ENCODE measurements at regions of chr5 and their contacts with region 1.

Region 1: DNA sequence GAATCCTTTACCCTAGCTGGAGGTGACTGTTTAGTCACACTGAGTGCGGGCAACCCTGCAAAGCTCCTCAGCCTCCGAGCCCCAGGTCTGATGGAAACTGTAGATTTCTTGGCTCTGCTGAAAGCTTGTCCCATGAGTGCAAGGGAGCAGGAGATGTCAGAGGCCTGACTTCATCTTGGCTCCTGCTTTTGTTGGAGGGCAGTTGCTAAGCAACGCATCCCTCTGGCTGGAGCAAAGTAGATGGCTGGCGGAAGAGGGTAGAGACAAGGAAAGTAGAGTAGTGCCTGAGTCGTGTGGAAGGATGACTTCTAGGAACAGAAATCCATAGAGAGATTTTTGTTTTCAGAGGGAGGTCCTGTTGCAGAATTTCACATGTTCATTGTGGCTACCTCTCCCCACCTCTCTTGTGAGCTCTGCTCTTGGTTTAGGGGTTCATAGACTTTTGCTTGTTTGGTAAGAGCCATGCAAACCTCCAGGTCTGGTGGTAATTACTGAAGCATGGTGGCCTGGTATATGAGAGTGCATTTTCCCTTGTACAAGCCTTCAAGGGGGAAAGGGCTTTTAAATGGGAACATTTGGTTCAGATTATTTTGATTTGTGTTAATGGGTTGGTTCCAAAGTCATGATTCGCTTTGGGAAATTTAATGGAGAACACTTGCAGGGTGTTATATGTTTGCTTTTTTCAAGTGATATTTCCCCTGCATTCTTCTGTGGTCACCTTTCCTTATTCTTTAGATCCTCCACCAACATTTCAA is 71.5 kb downstream of the ARHGAP26 start:
- DNase-seq: no peak
- H3K4me3 ChIP-seq: no peak overlapping the region
- H3K27ac ChIP-seq: no peak overlapping the region
- H3K4me1 ChIP-seq: no peaks in the 10 kb centered on the region
- H3K27me3 ChIP-seq: no peaks in the 10 kb centered on the region
- CTCF ChIP-seq: no peak

Region 2: GRCh38 chr5:142807372-142807911 is 34.2 kb before region 1 on chr5:
- CTCF ChIA-PET with region 1: no interaction called
- dilution Hi-C with region 1: loop called (anchors 5 kb)
- in situ Hi-C with region 1: no loop called
- intact Hi-C with region 1: no loop called
- DNase-seq: no peak
- H3K4me3 ChIP-seq: no peak overlapping the region
- H3K27ac ChIP-seq: no peak overlapping the region
- H3K4me1 ChIP-seq: no peaks in the 10 kb centered on the region
- H3K27me3 ChIP-seq: no peaks in the 10 kb centered on the region
- CTCF ChIP-seq: no peak

Region 3: GRCh38 chr5:142894749-142895148 is 53.1 kb after region 1 on chr5:
- CTCF ChIA-PET with region 1: no interaction called
- dilution Hi-C with region 1: no loop called
- in situ Hi-C with region 1: no loop called
- intact Hi-C with region 1: no loop called
- DNase-seq: no peak
- H3K4me3 ChIP-seq: no peak overlapping the region
- H3K27ac ChIP-seq: no peak overlapping the region
- H3K4me1 ChIP-seq: peaks cover 17% of the 10 kb centered on the region
- H3K27me3 ChIP-seq: no peaks in the 10 kb centered on the region
- CTCF ChIP-seq: no peak